Transverse colon (tissue), 4 donors: ENCODE measurements at regions of chr4 and their contacts with region 1.

Region 1: GRCh38 chr4:14929666-14930065 is 72.6 kb upstream of the CPEB2 start:
- DNase-seq: no peak
- H3K4me3 ChIP-seq: no peak overlapping the region
- H3K27ac ChIP-seq: no peak overlapping the region
- H3K4me1 ChIP-seq: no peaks in the 10 kb centered on the region
- H3K27me3 ChIP-seq: no peaks in the 10 kb centered on the region
- CTCF ChIP-seq: no peak
- EP300 ChIP-seq: no peak
- POLR2A ChIP-seq: no peak

Region 2: DNA sequence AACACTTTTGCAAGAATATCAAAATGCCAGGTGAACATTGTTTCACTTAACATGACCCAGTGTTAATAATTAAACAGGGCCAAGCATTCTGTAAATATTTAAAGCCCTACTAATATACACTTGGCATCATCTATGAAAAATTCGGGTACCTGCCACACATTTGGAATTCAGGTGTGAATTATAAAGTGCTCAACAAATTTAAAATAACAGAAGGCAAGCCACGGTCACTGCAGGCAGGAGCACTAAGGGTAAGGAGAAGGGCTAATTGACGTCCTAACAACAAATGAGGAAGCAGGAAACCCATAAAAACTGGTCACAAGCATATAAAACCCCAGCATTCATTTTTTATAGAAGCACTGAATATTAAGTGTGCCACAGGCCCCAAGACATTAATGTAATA is 28.8 kb after region 1 on chr4:
- in situ Hi-C with region 1: no loop called
- intact Hi-C with region 1: loop called (anchors 1 kb)
- DNase-seq: no peak
- H3K4me3 ChIP-seq: no peak overlapping the region
- H3K27ac ChIP-seq: no peak overlapping the region
- H3K4me1 ChIP-seq: no peaks in the 10 kb centered on the region
- H3K27me3 ChIP-seq: no peaks in the 10 kb centered on the region
- CTCF ChIP-seq: no peak
- EP300 ChIP-seq: no peak
- POLR2A ChIP-seq: no peak